ENCODE measurements at regions of chrX and their contacts with region 1.

Region 1: GRCh38 chrX:121000587-121000986 is 15.0 kb upstream of the CT47A1 start:
- DNase-seq: peak; percentile 30
- ATAC-seq: no peak
- H3K4me3 ChIP-seq: no peak overlapping the region
- H3K27ac ChIP-seq: no peak overlapping the region
- H3K4me1 ChIP-seq: no peaks in the 10 kb centered on the region
- H3K27me3 ChIP-seq: no peaks in the 10 kb centered on the region
- CTCF ChIP-seq: peak; percentile 57
- EP300 ChIP-seq: no peak
- POLR2A ChIP-seq: no peak
- RAD21 ChIP-seq: peak; percentile 47; the same call in 1 of the 2 replicates

Region 2: GRCh38 chrX:121011254-121011653 is 10.7 kb after region 1 on chrX:
- CTCF ChIA-PET with region 1: no interaction called
- POLR2A ChIA-PET with region 1: no interaction called
- in situ Hi-C with region 1: no loop called
- intact Hi-C with region 1: no loop called
- DNase-seq: peak; percentile 52
- ATAC-seq: peak; percentile 36
- H3K4me3 ChIP-seq: no peak overlapping the region
- H3K27ac ChIP-seq: peak overlapping the region; percentile 81
- H3K4me1 ChIP-seq: peaks cover 63% of the 10 kb centered on the region
- H3K27me3 ChIP-seq: no peaks in the 10 kb centered on the region
- CTCF ChIP-seq: no peak
- EP300 ChIP-seq: no peak
- POLR2A ChIP-seq: no peak
- RAD21 ChIP-seq: no peak

Region 3: GRCh38 chrX:121254336-121254735 is 253.7 kb after region 1 on chrX:
- CTCF ChIA-PET with region 1: interaction called, 3 read pairs
- POLR2A ChIA-PET with region 1: no interaction called
- in situ Hi-C with region 1: no loop called
- intact Hi-C with region 1: loop called (anchors 1 kb)
- DNase-seq: peak; percentile 5
- ATAC-seq: peak; percentile 68
- H3K4me3 ChIP-seq: no peak overlapping the region
- H3K27ac ChIP-seq: no peak overlapping the region
- H3K4me1 ChIP-seq: no peaks in the 10 kb centered on the region
- H3K27me3 ChIP-seq: no peaks in the 10 kb centered on the region
- CTCF ChIP-seq: peak; percentile 64
- EP300 ChIP-seq: no peak
- POLR2A ChIP-seq: no peak
- RAD21 ChIP-seq: peak; percentile 17; the same call in 1 of the 2 replicates